Motor neuron (in vitro differentiated cells): ENCODE measurements at regions of chr1 and their contacts with region 1.

Region 1: GRCh38 chr1:170967042-170967910 is 31.9 kb downstream of the MROH9 start:
- ATAC-seq: peak in 6 of 8 experiments; percentile 47 to 85 (median 72)
- H3K4me3 ChIP-seq: no peak overlapping the region
- H3K27ac ChIP-seq: no peak overlapping the region
- H3K4me1 ChIP-seq: no peaks in the 10 kb centered on the region

Region 2: GRCh38 chr1:170881268-170882265 is 85.7 kb before region 1 on chr1:
- in situ Hi-C with region 1: no loop called
- ATAC-seq: peak in 3 of 8 experiments; percentile 60 to 84 (median 76)
- H3K4me3 ChIP-seq: no peak overlapping the region
- H3K27ac ChIP-seq: no peak overlapping the region
- H3K4me1 ChIP-seq: no peaks in the 10 kb centered on the region

Region 3: GRCh38 chr1:171055966-171056643 is 88.8 kb after region 1 on chr1:
- in situ Hi-C with region 1: loop called in 1 of 9 experiments (anchors 25 kb)
- ATAC-seq: peak in 2 of 8 experiments; percentile 18 to 32
- H3K4me3 ChIP-seq: no peak overlapping the region
- H3K27ac ChIP-seq: no peak overlapping the region
- H3K4me1 ChIP-seq: no peaks in the 10 kb centered on the region

Region 4: GRCh38 chr1:171226747-171227370 is 259.6 kb after region 1 on chr1:
- in situ Hi-C with region 1: loop called in 1 of 9 experiments (anchors 25 kb)
- ATAC-seq: peak; percentile 40 to 91 (median 70)
- H3K4me3 ChIP-seq: no peak overlapping the region
- H3K27ac ChIP-seq: no peak overlapping the region
- H3K4me1 ChIP-seq: no peaks in the 10 kb centered on the region

Region 5: GRCh38 chr1:171366099-171366498 is 398.8 kb after region 1 on chr1:
- in situ Hi-C with region 1: no loop called
- ATAC-seq: no peak
- H3K4me3 ChIP-seq: no peak overlapping the region
- H3K27ac ChIP-seq: no peak overlapping the region
- H3K4me1 ChIP-seq: no peaks in the 10 kb centered on the region